Heart right ventricle (tissue), 16 donors: ENCODE measurements at regions of chr10 and their contacts with region 1.

Region 1: GRCh38 chr10:132142411-132143161 is 44.2 kb upstream of the DPYSL4 start:
- DNase-seq: peak in 1 of 2 donors; percentile 49
- ATAC-seq: peak; percentile 67 to 83 (median 70)
- H3K4me3 ChIP-seq: no peak overlapping the region
- H3K27ac ChIP-seq: no peak overlapping the region
- H3K4me1 ChIP-seq: peaks cover 0 to 12% (median 3%) of the 10 kb centered on the region in 9 donors
- H3K27me3 ChIP-seq: peaks cover 0 to 14% (median 6%) of the 10 kb centered on the region in 7 donors
- CTCF ChIP-seq: peak; percentile 68 to 92 (median 90)

Region 2: DNA sequence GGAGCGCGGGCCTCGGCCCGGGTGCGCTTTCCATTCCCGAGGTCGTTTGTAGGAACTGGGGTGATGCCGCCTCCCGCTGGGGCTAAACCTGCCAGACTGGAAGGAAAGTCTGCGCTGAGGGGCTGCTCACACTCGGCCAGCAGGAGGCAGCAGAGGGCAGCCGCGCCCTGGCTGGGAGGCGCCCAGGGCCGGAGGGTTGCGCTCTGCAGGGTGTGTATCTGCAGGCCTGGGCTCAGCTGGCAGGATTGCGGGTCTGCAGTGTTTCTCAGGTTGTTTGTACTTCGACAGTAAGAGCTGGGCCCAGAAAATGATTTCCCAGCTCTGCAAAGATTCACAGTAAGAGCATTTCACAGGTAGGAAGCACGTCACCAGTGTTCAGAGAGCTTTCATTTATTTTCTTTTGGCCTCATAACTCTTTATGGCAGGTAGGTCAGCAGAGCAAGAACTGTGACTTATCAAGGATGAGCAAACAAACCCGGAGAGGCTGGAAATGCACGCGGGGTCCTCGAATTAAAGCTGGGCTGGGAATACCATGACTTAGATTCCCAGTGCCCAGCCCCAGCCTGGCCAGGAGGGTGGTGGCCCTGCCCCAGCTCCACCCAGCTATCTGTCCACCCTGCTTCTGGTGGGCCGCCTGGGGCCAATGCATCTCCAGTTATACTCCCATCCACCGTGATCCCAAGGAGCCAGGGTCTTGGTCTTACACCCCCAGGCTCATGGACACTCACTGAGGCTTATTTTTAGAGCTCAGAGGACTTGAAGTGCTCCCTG is 257.0 kb before region 1 on chr10:
- intact Hi-C with region 1: loop called (anchors 2 to 10 kb)
- DNase-seq: peak; percentile 57 to 84
- ATAC-seq: peak; percentile 94 to 98 (median 95)
- H3K4me3 ChIP-seq: no peak overlapping the region
- H3K27ac ChIP-seq: no peak overlapping the region
- H3K4me1 ChIP-seq: peaks cover 0 to 8% (median 2%) of the 10 kb centered on the region in 9 donors
- H3K27me3 ChIP-seq: peaks cover 0 to 24% (median 2%) of the 10 kb centered on the region in 7 donors
- CTCF ChIP-seq: peak; percentile 95 to 98 (median 97)

Region 3: DNA sequence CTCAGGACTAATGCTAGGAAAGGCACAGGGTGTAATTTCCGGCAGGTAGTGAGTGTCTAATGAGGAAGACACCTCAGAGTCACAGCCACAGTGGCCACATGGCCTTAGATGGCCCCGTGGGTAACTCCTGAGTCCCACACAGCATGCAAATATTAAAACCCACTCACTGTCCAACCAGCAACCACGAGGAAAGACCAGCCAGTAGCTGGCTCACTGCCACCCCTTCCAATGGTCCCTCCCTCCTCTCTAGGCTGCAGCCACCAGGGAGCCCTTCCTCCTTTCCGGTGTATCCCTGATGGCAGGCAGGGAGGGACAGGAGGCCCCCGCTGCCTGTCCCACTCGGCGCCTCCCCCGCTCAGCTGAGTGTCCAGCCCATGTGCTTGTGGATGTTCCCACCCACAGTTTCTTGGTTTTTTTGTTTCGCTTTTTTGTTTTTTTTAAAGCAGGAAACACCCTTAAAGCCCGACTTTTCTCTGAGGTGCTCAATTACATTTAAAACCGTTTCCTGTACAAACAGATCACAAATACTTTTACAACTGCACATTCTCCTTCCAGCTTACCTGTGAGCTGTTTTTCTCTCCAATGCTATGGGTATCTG is 170.0 kb before region 1 on chr10:
- intact Hi-C with region 1: loop called in 1 of 10 experiments (anchors 10 kb)
- DNase-seq: peak; percentile 76 to 83
- ATAC-seq: peak; percentile 77 to 91 (median 85)
- H3K4me3 ChIP-seq: peak overlapping the region in 6 of 10 donors; percentile 4 to 36 (median 10)
- H3K27ac ChIP-seq: peak overlapping the region in 9 of 10 donors; percentile 23 to 81 (median 73)
- H3K4me1 ChIP-seq: peaks cover 8 to 45% (median 34%) of the 10 kb centered on the region in 9 donors
- H3K27me3 ChIP-seq: no peaks in the 10 kb centered on the region
- CTCF ChIP-seq: no peak

Region 4: DNA sequence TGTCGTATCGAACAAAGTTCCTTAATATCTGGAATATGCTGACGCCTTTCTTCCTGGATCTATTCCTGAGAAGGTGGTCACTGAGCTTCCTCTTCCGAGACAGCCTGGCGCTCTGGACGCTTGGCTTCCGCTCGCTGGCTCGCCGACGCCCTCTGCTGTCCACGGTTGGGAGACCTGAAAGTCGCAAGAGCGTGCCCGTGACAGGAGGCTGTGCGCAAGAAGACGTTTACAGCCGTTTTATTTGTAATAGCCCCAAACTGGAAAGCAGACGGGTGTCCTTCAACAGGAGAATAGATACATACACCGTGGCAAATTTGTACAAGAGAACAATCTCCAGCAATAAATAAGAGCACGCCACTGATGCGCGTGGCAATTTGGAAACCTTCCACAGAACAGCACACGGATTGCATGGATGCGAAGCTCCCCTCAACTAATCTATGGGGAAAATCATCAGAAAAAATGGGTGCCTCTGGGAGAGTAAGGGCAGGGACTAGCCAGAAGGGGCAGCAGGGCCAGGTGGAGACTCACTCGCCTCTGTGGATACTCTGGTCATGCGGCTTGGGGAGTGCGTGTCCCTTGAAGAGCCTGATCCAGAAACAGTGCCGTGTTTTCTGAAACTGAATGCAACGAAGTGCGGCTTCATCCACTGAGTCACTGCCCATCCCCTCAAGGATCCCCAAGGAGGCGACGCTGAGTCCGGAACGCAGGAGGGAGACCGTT is 119.3 kb before region 1 on chr10:
- intact Hi-C with region 1: loop called in 1 of 10 experiments (anchors 10 kb)
- DNase-seq: peak; percentile 82 to 89
- ATAC-seq: peak; percentile 78 to 95 (median 90)
- H3K4me3 ChIP-seq: peak overlapping the region; percentile 28 to 45 (median 34)
- H3K27ac ChIP-seq: no peak overlapping the region
- H3K4me1 ChIP-seq: peaks cover 0 to 12% (median 8%) of the 10 kb centered on the region in 9 donors
- H3K27me3 ChIP-seq: peaks cover 0 to 43% (median 34%) of the 10 kb centered on the region in 7 donors
- CTCF ChIP-seq: peak; percentile 87 to 97 (median 91)

Region 5: DNA sequence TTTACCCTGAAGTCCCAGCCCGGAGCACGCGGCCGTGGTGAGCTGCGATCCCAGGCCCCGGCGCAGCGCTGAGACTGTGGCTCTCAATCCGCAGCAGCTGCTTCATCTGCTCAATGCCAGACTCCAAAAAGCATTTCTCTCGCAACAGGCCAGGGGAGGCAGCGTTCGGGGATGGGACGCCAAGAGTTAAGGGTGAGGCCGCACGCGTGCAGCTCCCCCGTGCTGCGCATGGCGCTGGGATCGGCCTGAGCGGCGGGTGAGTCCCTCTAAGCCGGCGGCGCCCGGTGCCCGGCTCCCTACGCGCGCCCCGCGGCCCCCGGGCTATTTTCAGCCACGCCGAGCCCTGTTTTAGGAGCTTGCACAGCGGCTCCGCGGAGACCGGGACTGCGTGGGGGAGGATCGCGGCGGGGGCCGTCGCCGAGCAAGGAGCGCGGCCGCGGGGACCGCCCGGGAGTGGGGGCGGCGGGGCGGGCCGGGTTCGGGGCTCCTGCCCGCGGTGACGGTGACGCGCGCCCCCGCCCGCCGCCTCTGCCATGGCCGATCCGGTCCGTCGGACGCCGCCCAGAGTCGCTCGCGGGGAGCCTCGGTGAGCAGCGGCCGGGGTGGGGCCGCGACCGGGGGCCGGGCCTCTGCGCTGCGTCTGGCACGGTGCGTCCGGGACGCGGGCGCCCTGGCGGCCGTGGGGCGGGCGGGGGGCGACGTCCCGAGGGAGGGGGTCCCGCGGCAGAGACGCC is 106.3 kb before region 1 on chr10:
- intact Hi-C with region 1: loop called in 8 of 10 experiments (anchors 5 to 10 kb)
- DNase-seq: peak in 1 of 2 donors; percentile 37
- ATAC-seq: peak; percentile 63 to 76 (median 70)
- H3K4me3 ChIP-seq: peak overlapping the region in 9 of 10 donors; percentile 37 to 53 (median 49)
- H3K27ac ChIP-seq: peak overlapping the region in 5 of 10 donors; percentile 14 to 51 (median 39)
- H3K4me1 ChIP-seq: peaks cover 0 to 12% (median 5%) of the 10 kb centered on the region in 9 donors
- H3K27me3 ChIP-seq: peaks cover 0 to 75% (median 57%) of the 10 kb centered on the region in 7 donors
- CTCF ChIP-seq: no peak

Region 6: GRCh38 chr10:132078746-132079345 is 63.7 kb before region 1 on chr10:
- intact Hi-C with region 1: no loop called
- DNase-seq: no peak
- ATAC-seq: peak in 6 of 8 donors; percentile 7 to 88 (median 49)
- H3K4me3 ChIP-seq: no peak overlapping the region
- H3K27ac ChIP-seq: no peak overlapping the region
- H3K4me1 ChIP-seq: no peaks in the 10 kb centered on the region
- H3K27me3 ChIP-seq: no peaks in the 10 kb centered on the region
- CTCF ChIP-seq: no peak

Region 7: GRCh38 chr10:132096223-132096622 is 46.4 kb before region 1 on chr10:
- intact Hi-C with region 1: no loop called
- DNase-seq: no peak
- ATAC-seq: peak; percentile 52 to 96 (median 89)
- H3K4me3 ChIP-seq: no peak overlapping the region
- H3K27ac ChIP-seq: no peak overlapping the region
- H3K4me1 ChIP-seq: peaks cover 0 to 11% (median 0%) of the 10 kb centered on the region in 9 donors
- H3K27me3 ChIP-seq: no peaks in the 10 kb centered on the region
- CTCF ChIP-seq: no peak